ENCODE measurements at regions of chr12 and their contacts with region 1.

Region 1: GRCh38 chr12:120249875-120250795 is 15.4 kb downstream of the PXN start:
- DNase-seq: peak; percentile 87
- ATAC-seq: peak; percentile 35
- H3K4me3 Mint-ChIP-seq: peak overlapping the region; percentile 71
- H3K27ac Mint-ChIP-seq: peak overlapping the region; percentile 94
- H3K4me1 Mint-ChIP-seq: peaks cover 81% of the 10 kb centered on the region
- H3K27me3 Mint-ChIP-seq: no peaks in the 10 kb centered on the region

Region 2: GRCh38 chr12:120234643-120235368 is 15.3 kb before region 1 on chr12:
- CTCF ChIA-PET with region 1: interaction called, 768 read pairs
- DNase-seq: no peak
- ATAC-seq: no peak
- H3K4me3 Mint-ChIP-seq: no peak overlapping the region
- H3K27ac Mint-ChIP-seq: no peak overlapping the region
- H3K4me1 Mint-ChIP-seq: peaks cover 67% of the 10 kb centered on the region
- H3K27me3 Mint-ChIP-seq: no peaks in the 10 kb centered on the region